ENCODE measurements at regions of chrX and their contacts with region 1.

Region 1: DNA sequence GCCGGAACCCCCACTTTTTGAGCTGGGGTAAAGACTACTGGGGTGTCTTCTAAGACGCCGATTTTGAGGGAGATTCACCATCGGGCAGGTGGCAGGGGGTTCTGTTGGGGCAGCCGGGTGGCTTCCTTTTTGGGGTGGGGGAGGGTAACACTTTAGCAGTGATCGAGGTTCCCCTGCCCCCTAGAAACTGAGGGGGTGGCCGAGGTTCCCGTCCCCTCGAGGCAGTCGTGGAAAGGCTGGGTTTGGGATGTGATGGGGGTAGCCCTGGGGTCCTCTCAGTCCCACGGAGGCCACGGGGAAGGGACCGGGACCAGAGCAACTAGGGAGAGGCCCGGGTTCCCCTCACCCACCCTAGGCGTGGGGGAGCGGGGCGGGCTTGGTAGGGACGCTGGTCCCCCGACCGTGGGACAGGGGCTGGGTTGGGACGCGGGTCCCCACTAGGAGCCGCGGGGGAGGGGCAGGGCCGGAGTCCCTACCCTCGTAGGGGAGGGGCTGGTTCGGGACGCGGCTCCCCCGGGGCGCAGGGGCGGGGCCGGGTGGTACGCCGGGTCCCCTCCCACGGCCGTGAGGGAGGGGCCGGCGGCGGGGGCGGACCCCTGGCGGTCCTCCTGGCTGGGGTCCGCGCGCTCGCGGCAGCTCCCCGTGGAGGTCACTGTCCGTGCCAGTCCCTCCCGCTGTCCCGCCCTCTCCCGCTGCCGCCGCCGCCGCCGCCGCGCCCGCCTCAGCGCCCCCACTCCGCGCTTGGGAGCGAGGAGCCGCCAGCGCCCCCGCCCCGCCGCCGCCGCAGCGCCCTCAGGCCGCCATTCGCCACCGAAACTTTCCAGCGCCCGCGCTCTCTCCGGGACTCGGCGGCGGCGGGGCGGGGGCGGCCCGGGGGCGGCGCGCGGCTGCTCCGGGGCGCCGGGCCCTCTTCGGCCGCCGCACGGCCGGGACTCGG is at the start of gene TBL1X:
- ATAC-seq: peak; percentile 14 to 68 (median 60)
- H3K4me3 ChIP-seq: peak within 1 kb of the TSS; percentile 41 to 95 (median 73)
- H3K27ac ChIP-seq: peak within 1 kb of the TSS; percentile 86 to 92
- H3K4me1 ChIP-seq: peaks cover 24 to 28% of the 10 kb centered on the region in 2 donors
- total RNA-seq, gene TBL1X: 5.5 to 19.4 (median 9.0) TPM

Region 2: GRCh38 chrX:9055354-9055753 is 409.3 kb before region 1 on chrX:
- in situ Hi-C with region 1: no loop called
- ATAC-seq: no peak
- H3K4me3 ChIP-seq: no peak overlapping the region
- H3K27ac ChIP-seq: no peak overlapping the region
- H3K4me1 ChIP-seq: no peaks in the 10 kb centered on the region

Region 3: GRCh38 chrX:9207142-9207541 is 257.6 kb before region 1 on chrX:
- in situ Hi-C with region 1: no loop called
- ATAC-seq: peak in 1 of 8 experiments; percentile 82
- H3K4me3 ChIP-seq: no peak overlapping the region
- H3K27ac ChIP-seq: no peak overlapping the region
- H3K4me1 ChIP-seq: peaks cover 0 to 3% of the 10 kb centered on the region in 2 donors

Region 4: DNA sequence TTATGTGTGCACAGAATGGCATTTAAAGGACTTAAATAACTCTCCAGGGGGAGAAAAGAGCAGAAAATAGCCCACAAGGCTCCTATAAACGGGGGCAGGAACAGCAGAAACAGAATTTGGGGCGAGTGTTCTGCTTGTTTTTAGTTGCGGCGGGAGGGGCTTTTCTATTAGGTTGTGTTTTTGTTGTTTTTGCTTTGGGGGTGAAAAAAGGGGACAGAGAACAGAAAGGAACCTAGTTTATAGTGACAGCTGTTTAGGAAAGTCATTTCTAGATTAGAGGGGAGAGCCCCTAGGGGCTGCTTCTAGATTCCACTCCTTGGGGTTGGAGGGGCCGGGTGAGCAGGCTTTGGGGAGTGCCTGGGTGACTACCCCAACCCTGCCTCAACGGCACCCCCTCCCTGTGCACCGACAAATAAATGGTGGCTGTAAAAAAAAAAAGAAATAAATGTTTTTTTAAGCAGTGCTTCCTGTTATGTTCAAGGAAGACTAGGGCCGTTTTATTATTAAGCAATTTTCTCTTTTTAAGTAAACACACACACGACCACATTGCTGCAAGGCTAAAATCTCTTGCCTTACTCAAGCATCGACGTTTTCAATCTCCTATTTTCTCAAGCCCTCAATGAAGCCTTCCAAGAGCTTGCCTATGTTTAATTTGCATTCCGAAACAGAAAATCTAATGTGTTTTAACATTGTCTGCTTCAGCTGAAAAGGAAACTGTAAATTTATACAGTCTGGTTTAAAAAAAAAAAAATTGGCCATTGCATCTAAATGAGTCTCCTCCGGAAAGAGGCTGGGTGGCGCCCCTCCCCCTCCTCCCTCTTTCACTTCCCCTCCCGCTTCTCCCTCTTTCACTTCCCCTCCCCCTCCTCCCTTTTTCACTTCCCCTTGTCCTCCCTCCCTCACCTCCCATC is 123.2 kb before region 1 on chrX:
- in situ Hi-C with region 1: loop called in 2 of 9 experiments (anchors 25 kb)
- ATAC-seq: peak in 4 of 8 experiments; percentile 4 to 14 (median 10)
- H3K4me3 ChIP-seq: peak overlapping the region in 1 of 5 donors; percentile 6
- H3K27ac ChIP-seq: peak overlapping the region; percentile 6 to 70
- H3K4me1 ChIP-seq: peaks cover 33 to 38% of the 10 kb centered on the region in 2 donors

Region 5: DNA sequence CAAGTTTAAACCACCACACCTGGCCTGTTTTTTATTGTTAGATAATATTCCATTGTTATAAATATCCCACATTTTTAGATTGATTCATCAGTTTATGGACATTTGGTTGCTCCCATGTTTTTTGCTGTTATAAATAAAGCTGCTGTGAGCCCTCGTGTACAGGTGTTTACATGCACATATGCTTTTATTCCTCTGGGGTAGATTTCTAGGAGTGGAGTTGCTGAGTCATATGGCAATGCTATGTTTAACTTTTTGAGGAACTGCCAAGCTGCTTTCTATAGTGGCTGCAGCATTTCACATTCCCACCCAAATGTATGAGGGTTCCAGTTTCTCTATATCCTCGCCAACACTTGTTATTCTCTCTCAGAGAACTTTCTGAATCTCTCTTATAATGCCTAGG is 90.7 kb after region 1 on chrX:
- in situ Hi-C with region 1: no loop called
- ATAC-seq: no peak
- H3K4me3 ChIP-seq: no peak overlapping the region
- H3K27ac ChIP-seq: no peak overlapping the region
- H3K4me1 ChIP-seq: no peaks in the 10 kb centered on the region

Region 6: GRCh38 chrX:9626379-9626778 is 161.7 kb after region 1 on chrX:
- in situ Hi-C with region 1: no loop called
- ATAC-seq: peak in 1 of 8 experiments; percentile 49
- H3K4me3 ChIP-seq: no peak overlapping the region
- H3K27ac ChIP-seq: no peak overlapping the region
- H3K4me1 ChIP-seq: no peaks in the 10 kb centered on the region

Measured in motor neuron (in vitro differentiated cells).